ENCODE measurements at regions of chr7 and their contacts with region 1.

Region 1: GRCh38 chr7:116512520-116513188 is 12.2 kb upstream of the CAV1 start:
- DNase-seq: no peak
- H3K4me3 ChIP-seq: peak overlapping the region in 47 of 59 donors; percentile 22 to 67 (median 48)
- H3K27ac ChIP-seq: peak overlapping the region in 26 of 59 donors; percentile 0 to 90 (median 56)
- H3K27me3 ChIP-seq: peaks cover 0 to 4% (median 0%) of the 10 kb centered on the region in 45 donors
- CTCF ChIP-seq: no peak

Region 2: GRCh38 chr7:116340943-116341907 is 171.4 kb before region 1 on chr7:
- intact Hi-C with region 1: no loop called
- DNase-seq: no peak
- H3K4me3 ChIP-seq: no peak overlapping the region
- H3K27ac ChIP-seq: no peak overlapping the region
- H3K27me3 ChIP-seq: no peaks in the 10 kb centered on the region
- CTCF ChIP-seq: peak in 20 of 56 donors; percentile 10 to 57 (median 26)

Region 3: DNA sequence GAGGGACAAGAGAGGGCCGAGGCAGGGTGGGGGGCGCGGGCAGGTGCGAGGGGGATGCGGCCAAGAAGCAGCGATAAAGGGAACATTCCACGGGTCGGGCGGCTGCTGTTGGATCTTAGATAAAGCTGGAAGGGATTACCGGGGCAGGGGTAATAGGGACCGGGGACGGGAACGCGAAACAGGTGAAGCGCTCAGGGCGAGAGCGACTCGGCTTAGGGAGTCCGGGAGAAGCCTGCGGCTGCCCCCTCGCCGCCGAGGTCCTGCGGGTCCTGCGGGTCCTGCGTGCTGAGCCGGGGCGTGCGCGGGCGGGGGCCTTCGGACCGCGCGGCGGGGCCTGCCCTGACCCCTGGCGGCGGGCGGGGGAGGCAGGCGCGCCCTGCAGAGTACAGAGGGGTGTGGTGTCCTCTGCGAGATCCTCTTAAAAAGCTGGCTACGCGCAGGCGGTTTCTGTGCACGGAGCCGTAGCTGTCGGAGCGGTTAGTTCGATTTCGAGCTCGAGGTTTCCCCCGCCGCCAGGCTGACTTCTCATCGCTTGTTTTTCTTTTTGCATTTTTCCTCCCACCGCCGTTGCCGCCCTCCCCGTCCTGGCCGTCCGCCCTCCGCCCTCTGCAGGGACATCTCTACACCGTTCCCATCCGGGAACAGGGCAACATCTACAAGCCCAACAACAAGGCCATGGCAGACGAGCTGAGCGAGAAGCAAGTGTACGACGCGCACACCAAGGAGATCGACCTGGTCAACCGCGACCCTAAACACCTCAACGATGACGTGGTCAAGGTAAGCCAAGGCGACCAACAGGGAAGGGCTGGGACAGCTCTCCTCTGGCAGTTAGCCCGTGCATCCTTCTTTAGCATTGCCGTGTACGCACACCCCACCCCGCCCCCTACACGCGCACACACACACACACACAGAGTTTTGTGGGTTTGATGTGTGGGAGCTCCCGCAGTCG is 13.5 kb after region 1 on chr7:
- intact Hi-C with region 1: loop called in 1 of 2 experiments (anchors 1 kb)
- DNase-seq: peak in 8 of 10 donors; percentile 32 to 75 (median 41)
- H3K4me3 ChIP-seq: peak overlapping the region; percentile 48 to 80 (median 67)
- H3K27ac ChIP-seq: peak overlapping the region in 41 of 59 donors; percentile 16 to 86 (median 66)
- H3K27me3 ChIP-seq: peaks cover 0 to 43% (median 10%) of the 10 kb centered on the region in 45 donors
- CTCF ChIP-seq: peak; percentile 28 to 90 (median 64)